Posterior vena cava (tissue), 2 donors: ENCODE measurements at regions of chr4 and their contacts with region 1.

Region 1: GRCh38 chr4:86961605-86962295 is 26.9 kb downstream of the AFF1 start:
- DNase-seq: no peak

Region 2: DNA sequence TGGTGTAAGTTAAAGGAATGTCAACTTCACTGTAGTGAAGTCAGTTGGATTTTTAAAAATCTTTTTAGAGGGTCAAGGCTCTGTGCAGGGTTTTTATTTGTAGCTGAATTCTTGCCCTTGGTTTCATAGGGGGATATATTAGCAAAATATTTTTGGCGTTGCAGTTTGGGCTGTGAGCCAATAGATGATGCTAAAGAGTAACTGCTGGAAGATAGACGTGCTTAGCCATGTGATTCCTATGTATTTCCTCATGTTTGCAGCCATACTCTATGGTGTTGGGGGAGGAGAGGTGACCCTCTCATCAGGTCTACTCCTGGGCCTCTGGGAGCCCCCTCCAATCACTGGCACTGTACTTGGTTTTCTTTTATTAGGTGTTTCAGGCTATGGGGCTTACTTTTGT is 1733.5 kb before region 1 on chr4:
- intact Hi-C with region 1: no loop called
- DNase-seq: no peak

Region 3: DNA sequence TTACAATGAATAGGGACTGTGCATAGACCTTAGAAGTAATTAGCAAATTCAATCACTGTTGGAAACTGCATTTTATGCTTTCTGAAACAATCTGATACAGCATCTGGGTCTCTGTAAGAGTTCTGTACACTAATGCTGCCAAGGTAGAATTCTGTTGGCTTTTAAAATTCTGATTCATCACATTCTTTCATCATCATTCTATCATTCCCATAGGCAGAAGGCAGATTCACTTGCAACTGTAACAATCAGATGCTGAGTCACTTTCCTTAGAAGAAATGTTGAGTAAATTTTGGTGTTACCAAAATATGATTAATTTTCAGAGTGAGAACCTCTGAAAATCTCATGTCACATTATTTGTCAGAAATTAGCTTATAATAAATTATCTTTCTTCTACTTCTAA is 869.1 kb before region 1 on chr4:
- intact Hi-C with region 1: loop called in 1 of 2 experiments (anchors 10 kb)
- DNase-seq: no peak

Region 4: GRCh38 chr4:88771883-88772450 is 1810.2 kb after region 1 on chr4:
- intact Hi-C with region 1: loop called in 1 of 2 experiments (anchors 5 kb)
- DNase-seq: no peak